Esophagus squamous epithelium (tissue), 5 donors: ENCODE measurements at regions of chr3 and their contacts with region 1.

Region 1: GRCh38 chr3:138068579-138069174 is 46.7 kb downstream of the DZIP1L start:
- DNase-seq: peak; percentile 10
- H3K4me3 ChIP-seq: no peak overlapping the region
- H3K27ac ChIP-seq: no peak overlapping the region
- H3K4me1 ChIP-seq: no peaks in the 10 kb centered on the region
- H3K27me3 ChIP-seq: no peaks in the 10 kb centered on the region
- CTCF ChIP-seq: peak; percentile 78 to 98 (median 96)
- POLR2A ChIP-seq: no peak

Region 2: DNA sequence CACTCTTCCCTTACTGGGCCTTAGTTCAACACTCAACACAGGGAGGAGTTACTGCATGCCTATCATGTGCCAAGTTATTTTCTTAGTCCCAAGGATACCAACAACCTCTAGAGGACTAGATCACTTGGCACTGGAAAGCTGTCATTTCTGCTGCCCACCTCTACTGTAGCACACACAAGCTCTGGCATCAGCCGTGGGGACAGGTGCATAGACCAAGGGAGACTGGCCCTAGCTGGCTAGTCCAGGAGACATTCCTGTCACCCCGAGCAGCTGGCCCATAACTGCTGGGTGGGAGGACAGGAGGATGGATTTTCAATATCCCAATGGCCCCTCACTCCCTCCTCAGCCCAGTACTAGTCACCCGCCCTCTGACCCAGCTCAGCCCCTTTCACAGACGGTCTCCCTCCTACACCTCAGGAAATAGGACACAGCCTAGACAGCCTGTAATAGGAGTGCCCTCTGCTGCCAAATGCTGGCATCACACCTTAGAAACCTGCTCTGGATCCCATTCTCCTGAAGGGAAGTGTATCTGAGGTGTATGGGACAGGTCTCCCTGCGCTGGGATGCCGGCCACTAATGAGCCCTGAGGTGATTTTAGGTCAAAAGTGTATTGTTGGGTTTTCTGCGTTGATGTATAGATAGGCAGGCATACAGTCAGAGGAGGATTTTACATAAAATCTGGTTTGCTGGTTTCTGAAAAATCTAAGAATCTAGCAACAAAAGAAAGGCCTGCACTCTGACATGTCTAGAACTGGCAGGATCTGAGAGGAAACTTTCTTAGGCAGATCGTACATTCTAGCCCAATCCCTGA is 50.1 kb after region 1 on chr3:
- intact Hi-C with region 1: loop called (anchors 5 kb)
- DNase-seq: no peak
- H3K4me3 ChIP-seq: no peak overlapping the region
- H3K27ac ChIP-seq: no peak overlapping the region
- H3K4me1 ChIP-seq: peaks cover 0 to 30% (median 9%) of the 10 kb centered on the region in 3 donors
- H3K27me3 ChIP-seq: no peaks in the 10 kb centered on the region
- CTCF ChIP-seq: peak; percentile 36 to 78 (median 72)
- POLR2A ChIP-seq: no peak